Thyroid gland (tissue), 4 donors: ENCODE measurements at regions of chr15 and their contacts with region 1.

Region 1: DNA sequence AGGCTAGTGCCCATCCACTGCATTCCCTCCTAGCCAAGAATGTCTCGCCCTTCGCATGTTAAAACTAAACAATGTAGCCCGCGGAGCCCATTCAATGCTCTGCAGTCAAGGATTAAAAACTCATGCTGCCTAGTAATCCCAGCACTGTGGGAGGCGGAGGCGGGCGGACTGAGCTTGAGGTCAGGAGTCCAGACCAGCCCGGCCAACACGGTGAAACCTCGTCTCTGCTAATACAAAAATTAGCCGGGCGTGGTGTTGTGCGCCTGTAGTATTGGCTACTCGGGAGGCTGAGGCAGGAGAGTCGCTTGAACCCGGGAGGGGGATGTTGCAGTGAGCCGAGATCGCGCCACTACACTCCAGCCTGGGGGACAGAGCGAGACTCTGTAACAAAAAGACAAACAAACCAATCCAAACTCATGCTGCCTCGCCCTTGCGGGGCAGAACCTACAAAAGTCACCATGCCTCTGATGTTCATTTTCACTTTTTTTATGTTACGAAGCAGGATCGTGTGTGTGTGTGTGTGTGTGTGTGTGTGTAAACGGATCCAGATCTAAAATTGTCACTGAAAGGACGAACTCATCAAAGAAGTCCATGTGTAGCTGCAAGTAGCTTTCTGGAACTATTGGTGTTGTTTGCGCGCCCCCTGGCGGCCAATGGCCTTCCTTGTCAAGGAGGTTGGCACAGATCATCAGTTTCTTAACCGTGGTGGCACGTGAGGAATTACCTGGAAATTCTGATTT is 54.8 kb upstream of the SPESP1 start:
- DNase-seq: peak; percentile 93 to 97
- H3K4me3 ChIP-seq: no peak overlapping the region
- H3K27ac ChIP-seq: no peak overlapping the region
- H3K4me1 ChIP-seq: peaks cover 0 to 5% of the 10 kb centered on the region in 2 donors
- H3K27me3 ChIP-seq: no peaks in the 10 kb centered on the region
- CTCF ChIP-seq: peak; percentile 78 to 93 (median 86)
- POLR2A ChIP-seq: no peak

Region 2: GRCh38 chr15:68730471-68730919 is 145.1 kb before region 1 on chr15:
- intact Hi-C with region 1: loop called (anchors 5 kb)
- DNase-seq: peak; percentile 43 to 46
- H3K4me3 ChIP-seq: no peak overlapping the region
- H3K27ac ChIP-seq: peak overlapping the region in 2 of 3 donors; percentile 50 to 54
- H3K4me1 ChIP-seq: peaks cover 8 to 17% of the 10 kb centered on the region in 2 donors
- H3K27me3 ChIP-seq: no peaks in the 10 kb centered on the region
- CTCF ChIP-seq: peak in 5 of 6 experiments; percentile 26 to 59 (median 46)
- POLR2A ChIP-seq: no peak

Region 3: GRCh38 chr15:68775671-68776476 is 99.7 kb before region 1 on chr15:
- intact Hi-C with region 1: loop called (anchors 10 kb)
- DNase-seq: peak; percentile 47 to 50
- H3K4me3 ChIP-seq: no peak overlapping the region
- H3K27ac ChIP-seq: peak overlapping the region in 2 of 3 donors; percentile 5 to 15
- H3K4me1 ChIP-seq: peaks cover 6 to 10% of the 10 kb centered on the region in 2 donors
- H3K27me3 ChIP-seq: no peaks in the 10 kb centered on the region
- CTCF ChIP-seq: no peak
- POLR2A ChIP-seq: no peak

Region 4: DNA sequence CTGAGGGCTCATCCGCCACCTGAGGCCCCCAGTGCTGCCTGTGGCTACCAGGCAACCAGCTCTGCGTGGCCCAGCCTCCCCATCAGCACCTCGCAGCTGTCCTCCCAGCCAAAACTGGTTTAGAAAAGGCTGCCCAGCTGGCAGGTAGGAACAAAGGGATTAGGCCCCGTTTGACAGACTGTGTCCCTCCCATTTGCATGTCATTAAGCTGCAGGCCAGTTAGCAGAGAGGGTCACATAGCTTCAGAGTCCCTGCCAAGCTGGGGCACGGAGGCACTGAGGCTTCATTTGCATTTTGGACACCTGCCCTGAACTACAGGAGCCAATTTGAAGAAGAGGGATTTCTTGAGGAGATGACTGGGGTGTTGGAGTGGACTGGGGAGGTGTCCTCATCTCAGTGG is 1044.3 kb after region 1 on chr15:
- intact Hi-C with region 1: no loop called
- DNase-seq: no peak
- H3K4me3 ChIP-seq: no peak overlapping the region
- H3K27ac ChIP-seq: no peak overlapping the region
- H3K4me1 ChIP-seq: no peaks in the 10 kb centered on the region
- H3K27me3 ChIP-seq: no peaks in the 10 kb centered on the region
- CTCF ChIP-seq: no peak
- POLR2A ChIP-seq: no peak